Heart right ventricle (tissue), 16 donors: ENCODE measurements at regions of chr17 and their contacts with region 1.

Region 1: GRCh38 chr17:75515496-75516254 is at the start of gene CASKIN2:
- DNase-seq: peak; percentile 98
- ATAC-seq: peak; percentile 87 to 94 (median 92)
- H3K4me3 ChIP-seq: peak within 1 kb of the TSS; percentile 79 to 98 (median 93)
- H3K27ac ChIP-seq: peak within 1 kb of the TSS; percentile 81 to 98 (median 92)
- H3K4me1 ChIP-seq: peaks cover 20 to 58% (median 51%) of the 10 kb centered on the region in 9 donors
- H3K27me3 ChIP-seq: peaks cover 0 to 13% (median 0%) of the 10 kb centered on the region in 7 donors
- CTCF ChIP-seq: peak; percentile 93 to 100 (median 96)
- total RNA-seq, gene CASKIN2: 29.0 to 59.2 (median 37.2) TPM

Region 2: GRCh38 chr17:75440738-75441448 is 74.8 kb before region 1 on chr17:
- intact Hi-C with region 1: loop called in 1 of 10 experiments (anchors 1 kb)
- DNase-seq: peak in 1 of 2 donors; percentile 23
- ATAC-seq: peak in 7 of 8 donors; percentile 35 to 77 (median 67)
- H3K4me3 ChIP-seq: no peak overlapping the region
- H3K27ac ChIP-seq: peak overlapping the region in 9 of 10 donors; percentile 48 to 87 (median 76)
- H3K4me1 ChIP-seq: peaks cover 0 to 43% (median 30%) of the 10 kb centered on the region in 9 donors
- H3K27me3 ChIP-seq: no peaks in the 10 kb centered on the region
- CTCF ChIP-seq: no peak

Region 3: DNA sequence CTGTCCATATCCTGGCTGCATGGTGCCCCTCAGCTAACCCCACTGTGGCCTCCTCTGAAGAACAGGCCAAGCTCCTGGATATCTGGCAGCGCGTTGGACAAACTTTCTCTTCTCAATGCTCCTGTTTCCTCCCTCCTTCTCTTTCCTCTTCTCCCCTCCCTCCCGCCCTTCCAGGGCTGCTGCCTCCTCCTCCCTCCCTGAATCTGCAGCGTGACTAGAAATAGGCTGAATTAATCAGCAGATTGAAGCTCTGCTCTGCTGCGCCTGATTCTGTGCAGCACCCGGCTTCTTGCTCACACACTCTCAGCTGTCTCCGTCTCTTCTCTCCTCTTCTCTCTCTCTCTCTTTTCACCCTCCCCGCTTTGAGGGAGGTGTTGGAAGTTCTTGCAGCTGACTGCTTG is 39.4 kb before region 1 on chr17:
- intact Hi-C with region 1: loop called in 1 of 10 experiments (anchors 5 kb)
- DNase-seq: no peak
- ATAC-seq: peak; percentile 60 to 85 (median 76)
- H3K4me3 ChIP-seq: peak overlapping the region in 8 of 10 donors; percentile 8 to 44 (median 34)
- H3K27ac ChIP-seq: peak overlapping the region; percentile 57 to 90 (median 81)
- H3K4me1 ChIP-seq: peaks cover 28 to 80% (median 45%) of the 10 kb centered on the region in 9 donors
- H3K27me3 ChIP-seq: no peaks in the 10 kb centered on the region
- CTCF ChIP-seq: no peak

Region 4: GRCh38 chr17:75535119-75535537 is 19.5 kb after region 1 on chr17:
- intact Hi-C with region 1: no loop called
- DNase-seq: no peak
- ATAC-seq: peak in 3 of 8 donors; percentile 7 to 32 (median 16)
- H3K4me3 ChIP-seq: no peak overlapping the region
- H3K27ac ChIP-seq: peak overlapping the region in 1 of 10 donors; percentile 78
- H3K4me1 ChIP-seq: no peaks in the 10 kb centered on the region
- H3K27me3 ChIP-seq: no peaks in the 10 kb centered on the region
- CTCF ChIP-seq: no peak

Region 5: DNA sequence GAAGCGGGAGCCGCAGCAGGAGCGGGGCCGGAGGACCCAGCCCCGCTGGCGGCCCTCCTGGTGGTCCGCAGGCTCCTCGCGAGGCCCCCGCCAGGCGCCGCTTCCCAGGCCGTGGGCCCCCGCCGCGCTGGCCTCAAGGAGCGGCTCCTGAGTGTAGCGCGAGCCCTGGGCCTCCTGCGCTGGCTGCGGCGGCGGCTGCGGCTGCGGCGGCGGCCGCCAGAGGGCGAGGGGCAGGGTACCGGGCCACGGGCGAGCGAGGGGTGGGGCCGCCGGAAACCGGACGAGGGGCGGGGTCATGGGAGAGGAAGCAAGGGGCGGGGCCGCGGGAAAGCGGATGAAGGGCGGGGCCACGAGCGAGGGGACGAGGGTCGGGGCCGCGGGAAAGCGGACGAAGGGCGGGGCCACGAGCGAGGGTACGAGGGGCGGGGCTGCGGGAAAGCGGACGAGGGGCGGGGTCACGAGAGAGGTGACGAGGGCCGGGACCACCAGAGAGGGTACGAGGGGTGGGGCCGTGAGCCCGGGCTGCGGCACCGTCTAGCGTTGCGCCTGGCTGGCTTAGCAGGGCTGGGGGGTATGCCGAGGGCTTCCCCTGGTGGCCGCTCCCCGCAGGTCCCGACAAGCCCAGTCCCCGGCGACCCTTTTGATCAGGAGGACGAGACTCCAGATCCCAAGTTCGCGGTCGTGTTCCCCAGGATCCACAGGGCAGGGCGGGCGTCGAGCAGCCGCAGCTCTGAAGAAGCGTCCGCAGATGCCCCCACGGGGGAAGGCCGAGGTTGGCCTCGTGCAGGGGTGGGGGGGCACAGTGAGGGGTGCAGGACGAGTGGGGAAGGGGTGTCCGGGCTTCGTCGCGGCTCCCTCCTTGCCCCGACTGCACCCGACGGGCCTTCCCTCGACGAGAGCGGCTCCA is 73.6 kb after region 1 on chr17:
- intact Hi-C with region 1: loop called in 5 of 10 experiments (anchors 5 kb)
- DNase-seq: peak; percentile 97 to 99
- ATAC-seq: peak; percentile 88 to 94 (median 92)
- H3K4me3 ChIP-seq: peak overlapping the region; percentile 56 to 89 (median 74)
- H3K27ac ChIP-seq: peak overlapping the region; percentile 92 to 99 (median 96)
- H3K4me1 ChIP-seq: peaks cover 9 to 31% (median 21%) of the 10 kb centered on the region in 9 donors
- H3K27me3 ChIP-seq: peaks cover 0 to 8% (median 0%) of the 10 kb centered on the region in 7 donors
- CTCF ChIP-seq: peak; percentile 50 to 83 (median 68)